ENCODE measurements at regions of chr2 and their contacts with region 1.

Region 1: DNA sequence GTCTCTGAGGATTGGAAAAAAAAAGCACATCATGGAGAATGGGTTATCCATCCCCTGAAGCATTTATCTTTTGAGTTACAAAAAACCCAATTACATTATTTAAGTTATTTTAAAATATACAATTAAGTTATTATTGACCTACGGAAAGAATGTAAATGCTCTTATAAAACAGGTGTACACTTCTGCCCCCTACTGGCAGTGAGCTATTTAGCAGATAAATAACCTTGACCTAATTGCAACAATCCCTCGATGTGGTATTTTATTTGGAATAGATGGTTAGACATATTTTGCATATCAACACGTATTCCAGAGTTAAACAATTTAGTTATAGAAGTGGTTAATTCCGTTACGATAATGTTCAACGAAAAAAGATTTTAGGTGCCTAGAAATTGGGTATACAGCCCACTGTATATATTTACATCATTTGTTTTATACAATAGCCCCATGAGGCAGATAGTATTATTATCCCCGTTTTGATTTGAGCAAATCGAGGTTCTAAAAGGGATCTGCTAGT is 9.1 kb upstream of the DAW1 start:
- DNase-seq: peak; percentile 64
- ATAC-seq: peak; percentile 36; the same call in 1 of the 2 replicates
- H3K4me3 ChIP-seq: no peak overlapping the region
- H3K27ac ChIP-seq: no peak overlapping the region
- H3K4me1 ChIP-seq: peaks cover 10% of the 10 kb centered on the region
- H3K27me3 ChIP-seq: no peaks in the 10 kb centered on the region
- CTCF ChIP-seq: peak; percentile 60
- POLR2A ChIP-seq: no peak
- RAD21 ChIP-seq: peak; percentile 45

Region 2: DNA sequence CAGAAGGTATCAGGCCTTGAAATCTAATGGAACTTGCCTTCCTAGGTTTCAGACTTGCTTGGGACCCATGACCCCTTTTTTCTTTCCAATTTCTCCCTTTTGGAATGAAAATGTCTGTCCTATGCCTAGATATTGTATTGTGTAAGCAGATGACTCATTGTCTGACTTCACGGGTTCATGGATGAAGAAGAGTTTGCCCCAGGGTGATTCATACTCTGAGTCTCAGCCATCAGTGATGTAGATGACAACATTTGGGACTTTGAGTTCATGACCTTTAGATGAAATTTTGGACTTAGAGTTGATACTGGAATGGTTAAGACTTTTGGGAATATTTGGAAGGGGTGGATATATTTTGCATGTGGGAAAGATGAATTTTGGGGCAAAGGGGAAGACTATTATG is 206.8 kb before region 1 on chr2:
- CTCF ChIA-PET with region 1: no interaction called
- POLR2A ChIA-PET with region 1: no interaction called
- dilution Hi-C with region 1: no loop called
- in situ Hi-C with region 1: no loop called
- intact Hi-C with region 1: loop called (anchors 5 kb)
- DNase-seq: peak; percentile 91
- ATAC-seq: peak; percentile 81
- H3K4me3 ChIP-seq: no peak overlapping the region
- H3K27ac ChIP-seq: no peak overlapping the region
- H3K4me1 ChIP-seq: no peaks in the 10 kb centered on the region
- H3K27me3 ChIP-seq: no peaks in the 10 kb centered on the region
- CTCF ChIP-seq: no peak
- POLR2A ChIP-seq: no peak
- RAD21 ChIP-seq: no peak

Region 3: GRCh38 chr2:227817850-227818674 is 44.2 kb before region 1 on chr2:
- CTCF ChIA-PET with region 1: interaction called, 4 read pairs
- POLR2A ChIA-PET with region 1: interaction called, 4 read pairs
- dilution Hi-C with region 1: no loop called
- in situ Hi-C with region 1: no loop called
- intact Hi-C with region 1: loop called (anchors 5 kb)
- DNase-seq: peak; percentile 100
- ATAC-seq: peak; percentile 89
- H3K4me3 ChIP-seq: peak overlapping the region; percentile 2; the same call in 1 of the 2 replicates
- H3K27ac ChIP-seq: peak overlapping the region; percentile 18
- H3K4me1 ChIP-seq: peaks cover 3% of the 10 kb centered on the region; the same call in 1 of the 2 replicates
- H3K27me3 ChIP-seq: no peaks in the 10 kb centered on the region
- CTCF ChIP-seq: 0 out of 2 replicates have a peak, but pooled peaks have one; percentile 16
- POLR2A ChIP-seq: peak; percentile 32; the same call in 1 of the 2 replicates
- RAD21 ChIP-seq: no peak

Measured in IMR-90 (cell line).